ENCODE measurements at regions of chr13 and their contacts with region 1.

Region 1: GRCh38 chr13:99606324-99607066 is 105.2 kb downstream of the TM9SF2 start:
- DNase-seq: peak; percentile 95
- H3K4me3 ChIP-seq: peak within 1 kb of the TSS; percentile 87
- H3K4me3 Mint-ChIP-seq: peak within 1 kb of the TSS; percentile 82
- H3K27ac Mint-ChIP-seq: peak within 1 kb of the TSS; percentile 87
- H3K4me1 ChIP-seq: peaks cover 7% of the 10 kb centered on the region
- H3K4me1 Mint-ChIP-seq: peaks cover 6% of the 10 kb centered on the region
- H3K27me3 ChIP-seq: no peaks in the 10 kb centered on the region
- H3K27me3 Mint-ChIP-seq: no peaks in the 10 kb centered on the region
- CTCF ChIP-seq: no peak

Region 2: DNA sequence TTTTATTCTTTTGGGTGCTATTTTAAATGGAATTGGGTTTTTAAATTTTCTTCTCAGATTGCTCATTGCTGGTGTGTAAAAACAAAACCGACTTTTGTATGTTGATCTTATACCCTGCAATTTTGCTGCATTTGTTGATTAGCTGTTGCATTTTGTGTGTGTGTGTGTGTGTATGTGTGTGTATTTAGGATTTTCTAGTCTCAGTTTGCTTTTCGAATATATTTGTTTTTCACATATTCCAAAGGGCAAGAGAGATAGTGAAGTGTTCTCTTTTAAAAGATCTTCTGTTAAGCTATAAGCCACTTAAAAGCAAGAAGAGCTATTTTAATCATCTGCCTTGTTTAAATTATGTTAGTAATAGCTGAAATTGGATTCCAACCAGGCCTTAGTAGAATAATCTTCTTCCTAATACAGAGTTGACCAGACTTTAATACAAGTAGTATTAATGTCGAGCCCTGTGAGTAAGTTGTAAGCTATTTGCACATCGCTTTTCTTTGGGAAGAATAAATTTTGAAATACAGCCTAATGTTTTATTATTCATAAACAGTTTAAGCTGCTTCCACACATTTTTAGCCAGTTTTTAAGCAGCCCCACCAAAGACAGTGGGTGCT is 47.8 kb before region 1 on chr13:
- CTCF ChIA-PET with region 1: no interaction called
- POLR2A ChIA-PET with region 1: interaction called, 3 read pairs
- intact Hi-C with region 1: loop called (anchors 1 kb)
- DNase-seq: no peak
- H3K4me3 ChIP-seq: no peak overlapping the region
- H3K4me3 Mint-ChIP-seq: peak overlapping the region; percentile 17
- H3K27ac Mint-ChIP-seq: peak overlapping the region; percentile 26
- H3K4me1 ChIP-seq: peaks cover 29% of the 10 kb centered on the region
- H3K4me1 Mint-ChIP-seq: peaks cover 22% of the 10 kb centered on the region
- H3K27me3 ChIP-seq: no peaks in the 10 kb centered on the region
- H3K27me3 Mint-ChIP-seq: no peaks in the 10 kb centered on the region
- CTCF ChIP-seq: no peak

Region 3: DNA sequence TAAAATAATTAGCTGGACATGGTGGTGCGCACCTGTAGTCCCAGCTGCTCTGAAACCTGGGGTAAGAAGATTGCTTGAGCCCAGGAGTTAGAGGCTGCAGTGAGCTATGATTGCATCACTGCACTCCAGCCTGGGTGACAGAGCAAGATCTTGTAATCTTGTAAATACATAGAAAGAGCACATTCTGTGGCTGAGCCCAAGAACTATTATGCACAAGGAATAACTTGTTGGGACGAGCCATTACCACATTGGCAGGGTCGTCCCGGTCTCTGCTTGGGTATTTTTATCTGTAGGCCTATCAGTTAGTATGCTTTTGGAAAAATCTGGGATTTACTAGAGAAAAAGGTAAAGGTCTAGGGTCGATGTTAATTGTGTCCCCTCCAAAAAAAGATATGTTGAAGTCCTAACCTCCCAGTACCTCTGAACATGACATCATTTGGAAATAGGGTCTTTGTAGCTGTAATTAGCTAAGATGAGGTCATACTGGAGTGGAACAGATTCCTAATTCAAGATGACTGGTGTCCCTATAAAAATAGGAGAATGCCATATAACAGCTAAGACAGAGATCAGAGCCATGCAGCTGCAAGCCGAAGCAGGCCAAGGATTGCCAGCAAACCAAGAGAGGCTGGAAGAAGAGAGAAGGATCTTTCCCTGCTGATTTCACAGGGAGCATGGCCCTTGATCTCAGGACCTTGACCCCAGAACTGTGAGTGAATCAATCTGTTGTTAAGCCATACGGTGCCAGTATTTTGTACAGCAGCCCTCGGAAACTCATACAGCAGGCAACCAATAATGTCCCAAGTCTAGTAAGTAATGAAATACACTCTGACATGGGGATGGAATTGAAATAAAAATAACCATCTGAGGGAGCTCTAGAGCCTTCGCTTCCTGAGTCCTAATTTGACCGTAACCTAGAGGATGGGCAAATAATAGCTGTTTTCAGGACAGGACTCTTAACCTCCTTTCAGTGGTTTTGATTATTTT is 28.3 kb before region 1 on chr13:
- CTCF ChIA-PET with region 1: interaction called, 12 read pairs
- POLR2A ChIA-PET with region 1: no interaction called
- intact Hi-C with region 1: loop called (anchors 2 kb)
- DNase-seq: no peak
- H3K4me3 ChIP-seq: no peak overlapping the region
- H3K4me3 Mint-ChIP-seq: no peak overlapping the region
- H3K27ac Mint-ChIP-seq: no peak overlapping the region
- H3K4me1 ChIP-seq: no peaks in the 10 kb centered on the region
- H3K4me1 Mint-ChIP-seq: no peaks in the 10 kb centered on the region
- H3K27me3 ChIP-seq: no peaks in the 10 kb centered on the region
- H3K27me3 Mint-ChIP-seq: no peaks in the 10 kb centered on the region
- CTCF ChIP-seq: peak in 1 of 2 experiments; percentile 30

Region 4: DNA sequence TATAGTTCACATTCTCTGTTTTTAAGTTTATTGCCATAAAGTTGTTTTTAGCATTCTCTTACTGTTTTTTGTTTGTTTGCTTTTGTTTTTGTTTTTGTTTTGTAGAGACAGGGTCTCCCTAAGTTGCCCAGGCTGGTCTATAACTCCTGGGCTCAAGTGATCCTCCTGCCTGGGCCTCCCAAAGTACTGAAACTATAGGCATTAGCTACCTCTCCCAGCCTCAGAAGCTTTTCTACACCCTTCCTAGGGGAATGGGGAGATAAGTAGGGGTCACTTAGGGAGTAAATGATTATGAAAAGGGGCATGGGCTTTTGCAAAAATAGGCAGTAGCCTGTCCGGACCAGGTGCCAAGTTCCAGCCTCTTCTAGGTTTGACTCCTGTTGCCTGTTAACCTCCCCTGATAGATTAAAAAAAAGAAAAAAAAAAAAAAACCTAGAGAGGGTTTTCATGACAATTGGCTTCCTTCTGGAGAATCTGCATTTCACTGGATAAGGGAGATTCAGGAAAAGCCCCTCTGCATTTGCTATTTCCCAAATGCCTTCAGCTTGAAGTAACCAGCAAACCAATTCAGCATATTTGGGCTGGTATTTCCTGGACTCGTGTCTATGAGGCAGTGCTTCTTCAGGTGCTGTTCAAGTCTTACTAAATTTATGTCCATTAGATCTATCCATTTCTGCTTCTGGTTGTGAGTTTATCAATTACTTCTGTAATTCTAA is 111.6 kb after region 1 on chr13:
- CTCF ChIA-PET with region 1: no interaction called
- POLR2A ChIA-PET with region 1: no interaction called
- intact Hi-C with region 1: no loop called
- DNase-seq: no peak
- H3K4me3 ChIP-seq: no peak overlapping the region
- H3K4me3 Mint-ChIP-seq: no peak overlapping the region
- H3K27ac Mint-ChIP-seq: no peak overlapping the region
- H3K4me1 ChIP-seq: no peaks in the 10 kb centered on the region
- H3K4me1 Mint-ChIP-seq: no peaks in the 10 kb centered on the region
- H3K27me3 ChIP-seq: no peaks in the 10 kb centered on the region
- H3K27me3 Mint-ChIP-seq: peaks cover 3% of the 10 kb centered on the region
- CTCF ChIP-seq: no peak

Region 5: DNA sequence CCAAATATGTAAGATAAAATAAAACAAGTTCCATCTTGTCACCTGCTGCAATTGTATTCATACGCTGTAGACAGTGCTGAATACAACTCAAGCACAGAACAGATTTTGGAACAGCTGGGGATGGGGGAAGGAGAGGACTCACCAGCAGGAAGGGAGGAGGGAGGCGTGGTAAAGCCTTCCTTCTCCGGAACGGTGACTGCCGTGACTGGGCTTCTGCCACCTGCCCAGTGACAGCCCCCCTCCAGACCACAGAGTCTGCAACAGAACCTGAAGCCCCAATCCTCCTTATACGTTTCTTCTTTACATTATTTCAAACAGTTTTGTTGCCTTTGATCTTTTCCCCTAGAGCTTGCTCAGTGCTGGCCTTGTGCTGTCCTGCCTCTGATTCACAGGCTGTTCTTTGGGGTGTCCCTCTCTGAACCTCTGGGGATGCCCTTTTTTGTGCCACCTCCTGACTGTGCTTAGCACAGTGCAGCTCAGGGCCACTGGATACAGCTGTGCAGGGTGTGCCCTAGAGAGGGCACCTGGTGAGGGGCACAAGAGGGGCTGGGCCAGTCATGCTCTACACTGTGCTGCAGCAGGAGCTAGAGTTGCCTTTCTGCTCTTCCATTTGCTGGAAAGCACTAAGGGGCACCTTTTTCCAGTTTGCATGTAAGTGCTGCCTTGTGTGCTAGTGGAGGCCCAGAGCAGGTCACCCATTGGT is 152.1 kb after region 1 on chr13:
- CTCF ChIA-PET with region 1: no interaction called
- POLR2A ChIA-PET with region 1: no interaction called
- intact Hi-C with region 1: no loop called
- DNase-seq: no peak
- H3K4me3 ChIP-seq: no peak overlapping the region
- H3K4me3 Mint-ChIP-seq: no peak overlapping the region
- H3K27ac Mint-ChIP-seq: no peak overlapping the region
- H3K4me1 ChIP-seq: 0 out of 2 replicates have a peak, but pooled peaks cover 5% of the 10 kb centered on the region
- H3K4me1 Mint-ChIP-seq: peaks cover 9% of the 10 kb centered on the region
- H3K27me3 ChIP-seq: no peaks in the 10 kb centered on the region
- H3K27me3 Mint-ChIP-seq: no peaks in the 10 kb centered on the region
- CTCF ChIP-seq: no peak

Region 6: GRCh38 chr13:101341464-101341863 is 1735.0 kb after region 1 on chr13:
- CTCF ChIA-PET with region 1: no interaction called
- POLR2A ChIA-PET with region 1: no interaction called
- intact Hi-C with region 1: no loop called
- DNase-seq: no peak
- H3K4me3 ChIP-seq: no peak overlapping the region
- H3K4me3 Mint-ChIP-seq: no peak overlapping the region
- H3K27ac Mint-ChIP-seq: no peak overlapping the region
- H3K4me1 ChIP-seq: no peaks in the 10 kb centered on the region
- H3K4me1 Mint-ChIP-seq: no peaks in the 10 kb centered on the region
- H3K27me3 ChIP-seq: no peaks in the 10 kb centered on the region
- H3K27me3 Mint-ChIP-seq: peaks cover 16% of the 10 kb centered on the region
- CTCF ChIP-seq: no peak

Measured in Caco-2 (cell line).